CD14-positive monocyte (primary cell): ENCODE measurements at regions of chr5 and their contacts with region 1.

Region 1: GRCh38 chr5:39547553-39548154 is 122.9 kb upstream of the DAB2 start:
- DNase-seq: peak; percentile 35 to 65 (median 49)
- H3K4me3 ChIP-seq: no peak overlapping the region
- H3K4me3 Mint-ChIP-seq: no peak overlapping the region
- H3K27ac ChIP-seq: no peak overlapping the region
- H3K27ac Mint-ChIP-seq: no peak overlapping the region
- H3K4me1 ChIP-seq: peaks cover 10 to 13% of the 10 kb centered on the region in 2 donors
- H3K4me1 Mint-ChIP-seq: peaks cover 3% of the 10 kb centered on the region
- H3K27me3 ChIP-seq: no peaks in the 10 kb centered on the region
- H3K27me3 Mint-ChIP-seq: peaks cover 0 to 4% (median 2%) of the 10 kb centered on the region in 3 donors
- CTCF ChIP-seq: peak; percentile 77

Region 2: GRCh38 chr5:39376293-39376714 is 171.3 kb before region 1 on chr5:
- intact Hi-C with region 1: loop called (anchors 1 to 2 kb)
- DNase-seq: peak; percentile 34 to 69 (median 55)
- H3K4me3 ChIP-seq: no peak overlapping the region
- H3K4me3 Mint-ChIP-seq: no peak overlapping the region
- H3K27ac ChIP-seq: no peak overlapping the region
- H3K27ac Mint-ChIP-seq: no peak overlapping the region
- H3K4me1 ChIP-seq: no peaks in the 10 kb centered on the region
- H3K4me1 Mint-ChIP-seq: no peaks in the 10 kb centered on the region
- H3K27me3 ChIP-seq: no peaks in the 10 kb centered on the region
- H3K27me3 Mint-ChIP-seq: peaks cover 0 to 2% (median 0%) of the 10 kb centered on the region in 3 donors
- CTCF ChIP-seq: peak; percentile 92

Region 3: DNA sequence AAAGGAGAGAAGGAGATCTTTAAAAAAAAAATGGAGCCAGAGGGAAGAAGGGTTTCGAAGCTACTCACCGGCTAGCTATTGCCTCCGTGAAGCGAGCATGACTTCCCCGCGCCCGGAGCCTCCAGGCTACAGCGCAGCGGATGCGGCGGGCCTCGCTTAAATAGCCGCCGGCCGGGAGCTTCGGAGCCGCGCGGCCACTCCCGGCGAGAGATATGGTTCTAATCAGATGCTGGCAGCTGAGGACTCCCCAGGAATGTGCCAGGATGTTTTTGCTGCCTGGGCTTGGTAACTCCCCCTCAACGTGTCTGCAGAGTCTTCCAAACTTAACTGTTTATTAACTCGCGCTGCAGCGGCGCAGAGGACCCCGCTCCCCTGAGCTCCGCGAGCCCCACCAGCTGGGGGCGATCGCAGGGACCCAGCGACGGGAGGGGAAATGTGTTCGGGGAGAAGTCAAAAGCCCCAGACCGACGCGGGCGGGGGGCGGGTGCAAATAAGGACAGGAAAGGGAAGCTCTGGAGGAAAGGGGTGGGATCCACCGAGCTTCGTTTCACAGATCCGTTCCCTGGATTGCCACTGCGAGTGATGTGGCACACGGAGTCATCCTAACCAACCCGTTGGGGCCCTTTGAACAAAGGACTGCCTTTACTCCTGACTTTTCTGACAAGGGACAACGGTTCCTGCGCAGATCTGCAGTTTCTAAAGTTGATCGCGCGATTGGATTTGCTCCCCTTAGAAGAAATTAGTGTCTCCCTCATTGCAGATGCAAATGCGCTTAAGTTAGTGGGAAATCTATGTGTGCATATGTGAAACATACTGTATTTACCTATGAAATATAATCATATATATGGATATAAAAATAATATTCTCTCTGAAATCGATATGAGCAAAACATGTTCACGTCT is 122.7 kb before region 1 on chr5 and contains the start of gene DAB2:
- intact Hi-C with region 1: loop called in 1 of 2 experiments (anchors 5 kb)
- DNase-seq: peak; percentile 72 to 77 (median 73)
- H3K4me3 ChIP-seq: peak within 1 kb of the TSS; percentile 49 to 79 (median 65)
- H3K4me3 Mint-ChIP-seq: peak within 1 kb of the TSS; percentile 92 to 98
- H3K27ac ChIP-seq: peak within 1 kb of the TSS; percentile 36 to 55
- H3K27ac Mint-ChIP-seq: peak within 1 kb of the TSS; percentile 59 to 93 (median 87)
- H3K4me1 ChIP-seq: peaks cover 21 to 27% of the 10 kb centered on the region in 2 donors
- H3K4me1 Mint-ChIP-seq: peaks cover 39% of the 10 kb centered on the region
- H3K27me3 ChIP-seq: no peaks in the 10 kb centered on the region
- H3K27me3 Mint-ChIP-seq: peaks cover 4 to 11% (median 7%) of the 10 kb centered on the region in 3 donors
- CTCF ChIP-seq: peak; percentile 55
- polyA plus RNA-seq, gene DAB2: 0.98 to 4.8 (median 3.0) TPM

Region 4: GRCh38 chr5:39461026-39461682 is 86.5 kb before region 1 on chr5:
- intact Hi-C with region 1: loop called in 1 of 2 experiments (anchors 10 kb)
- DNase-seq: peak; percentile 57 to 77 (median 68)
- H3K4me3 ChIP-seq: peak overlapping the region in 1 of 3 experiments; percentile 35
- H3K4me3 Mint-ChIP-seq: peak overlapping the region; percentile 31 to 75
- H3K27ac ChIP-seq: peak overlapping the region in 1 of 2 donors; percentile 65
- H3K27ac Mint-ChIP-seq: peak overlapping the region; percentile 64 to 91 (median 85)
- H3K4me1 ChIP-seq: peaks cover 35 to 40% of the 10 kb centered on the region in 2 donors
- H3K4me1 Mint-ChIP-seq: peaks cover 37% of the 10 kb centered on the region
- H3K27me3 ChIP-seq: no peaks in the 10 kb centered on the region
- H3K27me3 Mint-ChIP-seq: peaks cover 0 to 5% (median 2%) of the 10 kb centered on the region in 3 donors
- CTCF ChIP-seq: no peak

Region 5: GRCh38 chr5:39475881-39476842 is 71.5 kb before region 1 on chr5:
- intact Hi-C with region 1: loop called in 1 of 2 experiments (anchors 10 kb)
- DNase-seq: peak; percentile 7 to 36 (median 32)
- H3K4me3 ChIP-seq: no peak overlapping the region
- H3K4me3 Mint-ChIP-seq: no peak overlapping the region
- H3K27ac ChIP-seq: no peak overlapping the region
- H3K27ac Mint-ChIP-seq: peak overlapping the region in 2 of 7 donors; percentile 28 to 43
- H3K4me1 ChIP-seq: peaks cover 11 to 13% of the 10 kb centered on the region in 2 donors
- H3K4me1 Mint-ChIP-seq: peaks cover 13% of the 10 kb centered on the region
- H3K27me3 ChIP-seq: no peaks in the 10 kb centered on the region
- H3K27me3 Mint-ChIP-seq: peaks cover 0 to 1% (median 0%) of the 10 kb centered on the region in 3 donors
- CTCF ChIP-seq: no peak